Heart right ventricle (tissue), 16 donors: ENCODE measurements at regions of chr11 and their contacts with region 1.

Region 1: GRCh38 chr11:11787305-11788062 is 54.3 kb upstream of the USP47 start:
- DNase-seq: peak; percentile 57 to 76
- ATAC-seq: peak; percentile 78 to 97 (median 89)
- H3K4me3 ChIP-seq: no peak overlapping the region
- H3K27ac ChIP-seq: no peak overlapping the region
- H3K4me1 ChIP-seq: peaks cover 0 to 8% (median 0%) of the 10 kb centered on the region in 9 donors
- H3K27me3 ChIP-seq: no peaks in the 10 kb centered on the region
- CTCF ChIP-seq: peak; percentile 77 to 97 (median 88)

Region 2: DNA sequence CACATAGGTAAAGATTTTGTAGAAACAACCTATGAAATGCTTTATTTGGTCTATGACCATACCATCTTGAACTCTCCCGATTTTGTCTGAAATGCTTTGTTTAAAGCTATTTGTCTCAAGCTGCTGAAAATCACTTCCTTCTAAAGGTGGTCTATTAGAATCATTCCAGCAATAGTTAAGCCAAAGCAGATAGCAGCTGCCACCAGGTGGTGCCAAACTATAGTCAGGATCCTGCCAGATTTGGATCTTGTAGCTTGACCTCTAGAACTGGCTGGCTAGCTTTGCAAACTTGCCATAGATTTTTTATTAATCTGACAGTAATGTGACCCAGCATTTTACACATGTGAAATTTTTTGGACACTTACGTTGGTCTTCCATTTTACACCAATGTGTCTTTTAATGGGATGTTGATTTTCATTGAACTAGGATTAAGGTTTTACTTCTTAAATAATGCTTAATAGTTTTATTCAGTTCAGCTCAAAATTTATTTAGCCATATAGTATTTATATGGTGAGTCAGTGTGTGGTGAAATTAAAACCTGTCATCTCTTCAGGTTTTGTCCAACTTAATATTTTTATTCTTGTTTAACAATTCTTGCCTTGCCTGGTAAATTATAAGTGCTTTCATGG is 1016.7 kb before region 1 on chr11:
- intact Hi-C with region 1: loop called in 1 of 10 experiments (anchors 10 kb)
- DNase-seq: peak; percentile 47 to 67
- ATAC-seq: peak in 7 of 8 donors; percentile 39 to 81 (median 75)
- H3K4me3 ChIP-seq: no peak overlapping the region
- H3K27ac ChIP-seq: peak overlapping the region in 8 of 10 donors; percentile 33 to 75 (median 58)
- H3K4me1 ChIP-seq: peaks cover 0 to 31% (median 10%) of the 10 kb centered on the region in 9 donors
- H3K27me3 ChIP-seq: no peaks in the 10 kb centered on the region
- CTCF ChIP-seq: peak; percentile 37 to 85 (median 72)

Region 3: DNA sequence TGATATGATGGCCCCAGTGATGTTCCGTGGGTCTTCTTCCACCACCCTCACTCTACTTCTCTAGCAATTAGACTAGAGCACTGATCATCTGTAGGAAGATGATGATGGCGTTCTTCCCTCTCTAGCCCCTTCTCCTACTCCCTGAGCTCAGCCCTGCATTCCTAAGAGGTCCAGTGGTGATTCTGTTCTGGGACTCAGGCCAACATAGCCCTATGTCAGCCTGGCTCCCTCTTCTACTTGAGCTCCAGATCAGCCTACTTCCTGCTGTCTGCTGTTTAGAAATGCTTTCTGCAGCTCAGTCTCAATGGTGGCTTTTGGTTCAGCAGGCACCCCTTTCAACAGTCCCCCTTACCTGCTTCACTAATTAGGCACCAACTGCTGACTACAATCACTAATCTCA is 843.5 kb before region 1 on chr11:
- intact Hi-C with region 1: loop called in 3 of 10 experiments (anchors 5 to 10 kb)
- DNase-seq: no peak
- ATAC-seq: peak in 4 of 8 donors; percentile 22 to 52 (median 42)
- H3K4me3 ChIP-seq: no peak overlapping the region
- H3K27ac ChIP-seq: no peak overlapping the region
- H3K4me1 ChIP-seq: peaks cover 0 to 9% (median 0%) of the 10 kb centered on the region in 9 donors
- H3K27me3 ChIP-seq: no peaks in the 10 kb centered on the region
- CTCF ChIP-seq: no peak

Region 4: GRCh38 chr11:11148104-11148509 is 639.4 kb before region 1 on chr11:
- intact Hi-C with region 1: loop called in 1 of 10 experiments (anchors 10 kb)
- DNase-seq: peak; percentile 67 to 78
- ATAC-seq: peak; percentile 95 to 99 (median 98)
- H3K4me3 ChIP-seq: no peak overlapping the region
- H3K27ac ChIP-seq: peak overlapping the region in 8 of 10 donors; percentile 32 to 83 (median 57)
- H3K4me1 ChIP-seq: peaks cover 4 to 22% (median 11%) of the 10 kb centered on the region in 9 donors
- H3K27me3 ChIP-seq: no peaks in the 10 kb centered on the region
- CTCF ChIP-seq: peak in 6 of 9 donors; percentile 7 to 60 (median 35)

Region 5: DNA sequence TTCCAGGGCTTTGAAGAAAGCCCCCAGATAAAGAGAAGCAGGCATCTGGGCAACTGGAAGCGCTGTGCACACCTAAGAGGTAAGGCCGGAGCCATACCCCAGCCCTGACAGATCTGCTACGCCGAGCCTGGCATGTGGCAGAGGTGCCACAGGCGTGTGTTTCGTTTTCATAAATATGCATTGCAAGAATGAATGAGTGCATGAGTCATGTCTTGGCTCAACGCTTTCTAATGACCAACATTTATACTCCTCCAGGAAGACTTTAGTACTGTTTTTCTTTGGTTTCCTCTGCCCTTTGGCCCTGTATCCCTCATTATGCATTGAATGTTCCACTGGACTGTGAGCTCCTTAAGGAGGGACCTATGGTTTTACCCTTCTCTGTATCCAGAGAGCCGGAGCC is 395.7 kb before region 1 on chr11:
- intact Hi-C with region 1: loop called in 1 of 10 experiments (anchors 10 kb)
- DNase-seq: no peak
- ATAC-seq: peak in 2 of 8 donors; percentile 25 to 36
- H3K4me3 ChIP-seq: no peak overlapping the region
- H3K27ac ChIP-seq: no peak overlapping the region
- H3K4me1 ChIP-seq: peaks cover 3 to 52% (median 15%) of the 10 kb centered on the region in 9 donors
- H3K27me3 ChIP-seq: no peaks in the 10 kb centered on the region
- CTCF ChIP-seq: no peak

Region 6: GRCh38 chr11:11621573-11622319 is 165.7 kb before region 1 on chr11 and contains the start of gene GALNT18:
- intact Hi-C with region 1: loop called in 3 of 10 experiments (anchors 5 kb)
- DNase-seq: peak; percentile 93 to 94
- ATAC-seq: peak; percentile 93 to 98 (median 96)
- H3K4me3 ChIP-seq: peak within 1 kb of the TSS; percentile 70 to 92 (median 78)
- H3K27ac ChIP-seq: peak within 1 kb of the TSS; percentile 24 to 88 (median 81)
- H3K4me1 ChIP-seq: peaks cover 0 to 58% (median 16%) of the 10 kb centered on the region in 9 donors
- H3K27me3 ChIP-seq: peaks cover 0 to 40% (median 0%) of the 10 kb centered on the region in 7 donors
- CTCF ChIP-seq: peak; percentile 40 to 73 (median 57)
- total RNA-seq, gene GALNT18: 9.8 to 29.0 (median 15.6) TPM